ENCODE measurements at regions of chr19 and their contacts with region 1.

Region 1: GRCh38 chr19:39532233-39533002 is at the start of gene EID2B:
- DNase-seq: peak; percentile 61
- H3K4me3 ChIP-seq: peak within 1 kb of the TSS; percentile 42 to 86 (median 60)
- H3K27ac ChIP-seq: peak within 1 kb of the TSS; percentile 50 to 90 (median 76)
- H3K4me1 ChIP-seq: peaks cover 5 to 28% (median 12%) of the 10 kb centered on the region in 3 donors
- H3K27me3 ChIP-seq: no peaks in the 10 kb centered on the region
- CTCF ChIP-seq: peak; percentile 94 to 100 (median 98)
- POLR2A ChIP-seq: peak in 2 of 4 donors; percentile 52 to 64
- total RNA-seq, gene EID2B: 0.48 to 3.6 (median 0.79) TPM in 3 of 4 donors, not detected in the other

Region 2: GRCh38 chr19:39435499-39436349 is 96.7 kb before region 1 on chr19 and contains the start of gene RPS16:
- intact Hi-C with region 1: loop called (anchors 10 kb)
- DNase-seq: peak; percentile 92
- H3K4me3 ChIP-seq: peak within 1 kb of the TSS; percentile 78 to 98 (median 96)
- H3K27ac ChIP-seq: peak within 1 kb of the TSS; percentile 88 to 95 (median 94)
- H3K4me1 ChIP-seq: peaks cover 25 to 65% (median 40%) of the 10 kb centered on the region in 3 donors
- H3K27me3 ChIP-seq: no peaks in the 10 kb centered on the region
- CTCF ChIP-seq: peak in 2 of 6 experiments; percentile 16 to 53
- POLR2A ChIP-seq: peak in 3 of 4 donors; percentile 97 to 98 (median 98)
- total RNA-seq, gene RPS16: 509 to 2,477 (median 1,257) TPM

Region 3: GRCh38 chr19:39474139-39474622 is 58.2 kb before region 1 on chr19:
- intact Hi-C with region 1: loop called (anchors 10 kb)
- DNase-seq: no peak
- H3K4me3 ChIP-seq: no peak overlapping the region
- H3K27ac ChIP-seq: no peak overlapping the region
- H3K4me1 ChIP-seq: peaks cover 0 to under 1% (median 0%) of the 10 kb centered on the region in 3 donors
- H3K27me3 ChIP-seq: no peaks in the 10 kb centered on the region
- CTCF ChIP-seq: peak; percentile 52 to 82 (median 60)
- POLR2A ChIP-seq: no peak

Region 4: GRCh38 chr19:39607026-39607425 is 74.6 kb after region 1 on chr19:
- intact Hi-C with region 1: no loop called
- DNase-seq: no peak
- H3K4me3 ChIP-seq: no peak overlapping the region
- H3K27ac ChIP-seq: no peak overlapping the region
- H3K4me1 ChIP-seq: no peaks in the 10 kb centered on the region
- H3K27me3 ChIP-seq: peaks cover 0 to 9% (median 0%) of the 10 kb centered on the region in 4 donors
- CTCF ChIP-seq: no peak
- POLR2A ChIP-seq: no peak